ENCODE measurements at regions of chr11 and their contacts with region 1.

Region 1: DNA sequence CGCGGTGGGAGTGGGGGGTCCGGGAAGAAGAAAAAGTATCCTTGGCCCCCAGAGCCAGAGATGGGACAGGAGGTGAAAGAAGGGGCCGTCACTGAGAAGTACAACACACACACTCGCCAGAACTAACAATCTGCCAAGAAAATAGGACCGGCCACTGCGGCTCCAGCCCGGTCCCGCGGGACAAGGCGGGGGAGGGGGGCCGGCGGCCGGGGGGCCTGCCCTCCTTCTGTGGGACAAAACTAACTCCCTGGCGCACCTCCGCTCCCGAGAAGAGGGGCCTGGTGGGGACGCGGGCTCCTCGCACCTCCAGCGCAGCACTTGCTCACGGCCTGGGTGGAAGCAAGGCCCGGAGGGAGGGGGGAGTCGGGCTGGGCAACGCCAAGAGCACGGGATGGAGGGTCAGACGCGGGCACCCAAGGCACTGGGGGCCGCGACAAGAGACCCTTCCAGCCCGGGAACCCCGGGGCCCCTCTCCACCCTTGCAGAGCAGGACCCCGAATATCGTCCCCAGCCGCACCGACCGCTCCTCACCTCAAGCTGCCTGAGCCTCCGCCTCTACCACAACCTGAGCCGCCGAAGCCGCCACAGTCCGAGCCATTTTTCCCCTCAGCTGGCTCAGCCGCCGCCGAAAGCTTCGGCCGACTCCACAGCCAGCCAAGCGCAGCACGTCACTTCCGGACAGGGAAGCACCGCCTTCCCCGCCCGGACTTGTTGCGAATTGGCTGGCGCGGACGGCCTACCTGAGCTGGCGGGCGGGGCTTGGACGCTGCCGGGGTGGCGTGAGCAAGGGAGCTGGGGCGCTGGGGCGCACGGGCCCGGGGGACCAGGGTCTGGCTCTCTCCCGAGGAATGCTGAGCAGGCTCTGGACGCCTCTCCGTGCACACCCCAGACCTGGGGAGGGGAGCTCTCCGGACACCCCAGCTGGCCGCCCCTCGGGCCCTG is at the start of gene PIK3C2A:
- DNase-seq: peak; percentile 95 to 96
- ATAC-seq: peak; percentile 93 to 96
- H3K4me3 ChIP-seq: peak within 1 kb of the TSS; percentile 89 to 97 (median 92)
- H3K27ac ChIP-seq: peak within 1 kb of the TSS; percentile 90 to 98 (median 96)
- H3K4me1 ChIP-seq: peaks cover 18 to 26% of the 10 kb centered on the region in 2 donors
- H3K27me3 ChIP-seq: no peaks in the 10 kb centered on the region
- CTCF ChIP-seq: no peak
- POLR2A ChIP-seq: peak; percentile 91 to 94
- total RNA-seq, gene PIK3C2A: 8.8 to 21.0 (median 14.8) TPM

Region 2: DNA sequence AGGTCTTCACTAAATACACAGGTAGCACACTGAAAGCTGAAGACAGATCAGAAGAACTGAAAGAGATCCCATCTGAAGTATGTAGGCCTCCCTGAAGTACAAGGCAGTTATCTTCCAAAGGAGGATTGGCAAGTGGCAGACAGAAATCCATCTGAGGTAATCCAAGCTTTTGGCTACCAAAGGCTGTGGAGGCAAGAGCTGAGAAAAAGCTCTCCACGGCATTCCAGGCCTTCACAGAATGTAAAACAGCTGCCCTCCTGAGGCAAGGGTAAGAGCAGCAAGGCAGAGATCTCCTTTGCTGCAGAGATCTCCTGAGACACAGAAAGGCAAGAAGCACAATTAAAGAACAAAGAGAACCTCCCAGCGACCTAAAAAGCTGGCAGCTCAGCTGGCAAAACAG is 18.9 kb before region 1 on chr11:
- in situ Hi-C with region 1: no loop called
- intact Hi-C with region 1: no loop called
- DNase-seq: no peak
- ATAC-seq: peak in 1 of 2 donors; percentile 64
- H3K4me3 ChIP-seq: no peak overlapping the region
- H3K27ac ChIP-seq: no peak overlapping the region
- H3K4me1 ChIP-seq: peaks cover 15 to 22% of the 10 kb centered on the region in 2 donors
- H3K27me3 ChIP-seq: no peaks in the 10 kb centered on the region
- CTCF ChIP-seq: no peak
- POLR2A ChIP-seq: no peak

Region 3: DNA sequence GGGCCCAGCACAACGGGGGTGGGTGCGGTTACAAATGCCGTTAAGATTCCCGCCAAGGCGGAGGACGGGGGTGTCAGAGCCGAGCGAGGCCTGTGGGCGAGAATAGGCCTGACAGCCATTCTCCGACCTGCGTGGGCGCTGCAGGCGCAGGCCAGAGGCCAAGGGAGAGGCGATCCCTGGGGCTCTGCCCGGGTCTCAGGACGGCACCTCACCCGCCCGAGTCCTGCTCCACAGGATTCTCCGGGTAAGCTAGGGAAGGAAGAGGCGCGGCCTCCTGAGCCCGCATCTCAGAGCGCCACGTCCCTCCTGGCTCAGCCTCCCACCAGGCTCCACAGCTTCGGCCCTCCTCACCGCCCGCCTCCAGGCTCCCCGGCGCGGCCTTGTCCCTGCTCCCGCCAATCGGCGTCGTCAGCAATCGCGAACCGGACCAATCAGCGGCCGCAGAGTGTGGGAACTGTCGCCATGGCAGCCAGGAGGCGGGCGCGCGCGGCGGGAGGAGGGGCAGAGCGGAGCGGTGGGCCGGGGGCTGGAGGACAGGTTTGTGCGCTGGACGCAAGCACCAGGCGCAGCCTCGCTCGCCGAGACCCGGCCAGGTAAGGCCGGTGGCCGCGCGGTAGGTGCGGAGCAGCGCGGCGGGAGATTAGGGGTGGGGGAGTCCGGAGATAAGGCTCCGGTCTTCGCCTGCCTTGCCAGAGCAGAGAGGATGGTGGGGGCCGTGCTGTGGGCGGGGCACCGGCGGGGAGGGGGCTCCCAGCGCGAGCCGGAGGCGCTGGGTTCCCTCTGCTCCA is 68.8 kb after region 1 on chr11 and contains the start of gene NUCB2:
- in situ Hi-C with region 1: no loop called
- intact Hi-C with region 1: loop called (anchors 2 kb)
- DNase-seq: peak; percentile 92 to 94
- ATAC-seq: peak; percentile 97
- H3K4me3 ChIP-seq: peak within 1 kb of the TSS; percentile 69 to 96 (median 91)
- H3K27ac ChIP-seq: peak within 1 kb of the TSS; percentile 88 to 93 (median 88)
- H3K4me1 ChIP-seq: peaks cover 11 to 19% of the 10 kb centered on the region in 2 donors
- H3K27me3 ChIP-seq: no peaks in the 10 kb centered on the region
- CTCF ChIP-seq: no peak
- POLR2A ChIP-seq: peak; percentile 42 to 68
- total RNA-seq, gene NUCB2: 15.1 to 59.1 (median 39.1) TPM